HCT116 (cell line): ENCODE measurements at regions of chr19 and their contacts with region 1.

Region 1: DNA sequence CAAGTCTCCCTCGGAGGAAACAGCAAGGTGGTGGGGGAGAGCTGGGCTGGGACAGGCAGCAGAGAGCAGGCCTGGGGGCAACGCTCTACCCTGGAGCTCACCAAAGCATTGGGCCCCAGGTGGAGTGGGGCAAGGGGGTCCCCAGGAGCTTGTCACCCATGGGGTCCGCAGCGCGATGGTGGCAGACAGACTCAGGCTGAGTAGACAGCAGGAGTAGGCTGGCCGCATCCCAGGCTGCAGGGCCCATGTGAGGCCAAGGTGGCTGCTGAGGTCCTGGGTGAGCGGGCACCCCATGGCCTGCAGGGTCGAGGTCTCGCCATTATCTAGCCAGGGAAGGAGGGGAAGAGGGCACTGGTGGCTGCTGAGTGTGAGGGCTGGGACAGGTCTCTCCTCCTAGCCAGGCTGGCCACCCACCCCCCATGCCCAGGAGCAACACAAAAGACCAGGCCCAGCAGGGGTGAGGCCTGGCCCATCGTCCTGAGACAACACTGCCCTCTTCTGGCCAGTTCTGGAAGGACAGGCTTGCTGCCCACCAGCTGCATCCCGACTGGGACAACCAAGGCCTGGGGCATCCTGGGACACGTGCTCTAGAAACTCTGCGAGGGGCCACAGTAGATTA is 33.1 kb downstream of the CEBPG start:
- DNase-seq: peak; percentile 32
- ATAC-seq: peak; percentile 93
- H3K4me3 ChIP-seq: no peak overlapping the region
- H3K27ac ChIP-seq: no peak overlapping the region
- H3K4me1 ChIP-seq: no peaks in the 10 kb centered on the region
- H3K27me3 ChIP-seq: no peaks in the 10 kb centered on the region
- CTCF ChIP-seq: peak; percentile 79 to 87 (median 79)
- POLR2A ChIP-seq: no peak
- RAD21 ChIP-seq: peak; percentile 95

Region 2: DNA sequence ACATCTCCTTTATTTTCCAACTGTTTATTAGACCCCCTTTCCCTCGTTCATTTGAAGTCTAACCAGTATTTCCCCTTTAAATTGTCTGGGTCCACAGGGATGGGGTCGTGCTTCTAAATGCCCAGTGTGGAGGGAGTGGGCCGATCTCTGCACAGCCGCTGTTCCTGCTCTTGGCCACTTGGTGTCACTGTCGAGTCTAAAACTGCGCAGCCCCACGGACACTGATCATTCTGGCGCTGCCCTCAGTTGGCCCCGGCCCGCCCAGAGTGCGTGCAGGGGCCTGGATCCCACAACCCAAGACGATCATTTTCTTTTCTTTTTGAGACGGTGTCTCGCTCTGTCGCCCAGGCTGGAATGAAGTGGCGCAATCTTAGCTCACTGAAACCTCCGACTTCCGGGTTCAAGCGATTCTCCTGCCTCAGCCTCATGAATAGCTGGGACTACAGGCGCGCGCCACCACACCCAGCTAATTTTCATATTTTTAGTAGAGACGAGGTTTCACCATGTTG is 262.7 kb before region 1 on chr19:
- CTCF ChIA-PET with region 1: interaction called, 4 read pairs
- POLR2A ChIA-PET with region 1: no interaction called
- RAD21 ChIA-PET with region 1: no interaction called
- intact Hi-C with region 1: loop called (anchors 10 kb)
- DNase-seq: peak; percentile 38
- ATAC-seq: peak; percentile 100
- H3K4me3 ChIP-seq: no peak overlapping the region
- H3K27ac ChIP-seq: no peak overlapping the region
- H3K4me1 ChIP-seq: peaks cover 0 to 5% of the 10 kb centered on the region in 2 experiments; a peak in 1 of 4 replicates
- H3K27me3 ChIP-seq: no peaks in the 10 kb centered on the region
- CTCF ChIP-seq: peak; percentile 75 to 92 (median 92); a peak in 5 of 6 replicates
- POLR2A ChIP-seq: no peak
- RAD21 ChIP-seq: peak; percentile 83

Region 3: GRCh38 chr19:33235269-33235995 is 171.2 kb before region 1 on chr19:
- CTCF ChIA-PET with region 1: interaction called, 20 read pairs
- POLR2A ChIA-PET with region 1: no interaction called
- RAD21 ChIA-PET with region 1: interaction called, 4 to 8 read pairs
- intact Hi-C with region 1: loop called (anchors 1 kb)
- DNase-seq: peak; percentile 57
- ATAC-seq: peak; percentile 88
- H3K4me3 ChIP-seq: no peak overlapping the region
- H3K27ac ChIP-seq: no peak overlapping the region
- H3K4me1 ChIP-seq: peaks cover 0 to 3% of the 10 kb centered on the region in 2 experiments; a peak in 1 of 4 replicates
- H3K27me3 ChIP-seq: no peaks in the 10 kb centered on the region
- CTCF ChIP-seq: peak; percentile 79 to 93 (median 92)
- POLR2A ChIP-seq: no peak
- RAD21 ChIP-seq: peak; percentile 77

Region 4: DNA sequence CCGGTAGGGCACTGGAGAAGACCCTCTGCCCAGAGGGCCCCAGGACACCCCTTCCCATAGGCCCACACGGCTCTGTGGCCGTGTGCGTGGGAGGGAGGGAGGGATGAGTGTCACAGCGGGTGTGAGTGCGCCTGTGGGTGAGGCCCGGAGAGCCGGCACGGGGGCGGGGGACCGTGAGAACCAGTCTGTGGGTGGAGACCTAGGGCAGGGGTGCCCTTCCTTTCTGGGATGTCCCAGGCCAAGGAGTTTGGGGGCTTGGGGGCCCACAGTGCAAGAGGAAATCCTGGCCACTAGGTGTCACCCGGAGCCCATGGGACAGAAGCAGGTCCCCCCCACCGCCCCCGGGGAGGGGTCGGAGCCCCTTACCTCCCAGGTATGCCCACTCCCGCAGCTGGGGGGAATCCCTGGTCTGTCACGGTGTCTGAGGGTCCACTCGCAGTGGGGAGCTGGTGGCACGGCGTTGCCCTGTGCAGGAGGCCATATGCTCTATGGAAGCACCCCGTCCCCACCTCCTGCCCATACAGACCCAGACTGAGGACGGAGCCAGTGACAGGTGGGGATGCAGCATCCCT is 165.0 kb before region 1 on chr19:
- CTCF ChIA-PET with region 1: interaction called, 20 read pairs
- POLR2A ChIA-PET with region 1: no interaction called
- RAD21 ChIA-PET with region 1: interaction called, 4 to 8 read pairs
- intact Hi-C with region 1: loop called (anchors 1 kb)
- DNase-seq: no peak
- ATAC-seq: peak; percentile 77
- H3K4me3 ChIP-seq: no peak overlapping the region
- H3K27ac ChIP-seq: no peak overlapping the region
- H3K4me1 ChIP-seq: peaks cover 0 to 11% of the 10 kb centered on the region in 2 experiments; a peak in 2 of 4 replicates
- H3K27me3 ChIP-seq: no peaks in the 10 kb centered on the region
- CTCF ChIP-seq: peak; percentile 61 to 82 (median 78)
- POLR2A ChIP-seq: no peak
- RAD21 ChIP-seq: peak; percentile 93

Region 5: DNA sequence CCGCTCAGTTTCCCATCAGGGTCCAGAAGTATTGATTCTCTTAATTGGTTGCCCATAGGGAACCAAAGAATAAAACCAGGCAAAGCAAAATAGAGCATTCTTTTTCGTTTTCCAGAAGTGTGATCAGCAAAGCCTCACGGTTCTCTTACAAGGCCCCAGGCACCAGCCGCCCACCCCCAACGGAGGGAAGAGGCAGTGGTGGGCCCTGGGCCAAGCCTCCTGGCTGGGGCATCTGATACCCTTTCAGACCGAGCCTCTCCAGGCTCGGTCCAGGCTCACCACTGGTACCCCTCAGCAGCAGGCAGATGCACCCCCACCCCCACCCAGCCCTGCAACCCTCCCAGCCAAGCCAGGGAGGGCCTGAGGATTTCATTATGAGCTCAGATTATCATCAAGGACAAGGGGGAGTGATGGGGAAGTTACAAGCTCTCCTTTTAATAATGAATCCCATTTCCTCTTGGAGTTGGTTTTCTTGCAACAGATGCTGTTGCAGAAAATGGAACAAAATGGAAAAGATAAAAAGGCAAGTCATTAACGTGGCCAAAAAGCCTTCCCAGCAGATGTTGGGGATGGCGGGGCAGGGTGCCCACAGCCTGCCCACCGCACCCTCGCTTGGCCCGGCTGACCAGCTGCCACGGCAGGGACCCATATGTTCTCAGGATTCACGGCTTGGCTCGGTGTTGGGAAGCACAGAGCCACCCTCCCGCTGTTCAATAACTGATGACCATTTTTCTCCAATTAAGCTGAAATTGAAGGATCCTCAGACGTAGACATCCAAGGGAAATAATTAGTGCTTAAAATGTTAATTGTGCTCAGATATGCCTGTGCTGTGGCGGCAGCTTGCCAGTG is 344.2 kb after region 1 on chr19:
- CTCF ChIA-PET with region 1: no interaction called
- POLR2A ChIA-PET with region 1: no interaction called
- RAD21 ChIA-PET with region 1: interaction called in 1 of 2 experiments, 10 read pairs
- intact Hi-C with region 1: no loop called
- DNase-seq: no peak
- ATAC-seq: no peak
- H3K4me3 ChIP-seq: no peak overlapping the region
- H3K27ac ChIP-seq: no peak overlapping the region
- H3K4me1 ChIP-seq: no peaks in the 10 kb centered on the region
- H3K27me3 ChIP-seq: peaks cover 31% of the 10 kb centered on the region
- CTCF ChIP-seq: no peak
- POLR2A ChIP-seq: no peak
- RAD21 ChIP-seq: no peak